Right cardiac atrium (tissue), 5 donors: ENCODE measurements at regions of chr3 and their contacts with region 1.

Region 1: GRCh38 chr3:42118762-42119361 is 27.7 kb downstream of the TRAK1 start:
- DNase-seq: peak in 1 of 3 donors; percentile 51
- ATAC-seq: peak; percentile 30 to 42
- H3K4me3 ChIP-seq: no peak overlapping the region
- H3K27ac ChIP-seq: no peak overlapping the region
- H3K4me1 ChIP-seq: peaks cover 27% of the 10 kb centered on the region
- H3K27me3 ChIP-seq: no peaks in the 10 kb centered on the region

Region 2: DNA sequence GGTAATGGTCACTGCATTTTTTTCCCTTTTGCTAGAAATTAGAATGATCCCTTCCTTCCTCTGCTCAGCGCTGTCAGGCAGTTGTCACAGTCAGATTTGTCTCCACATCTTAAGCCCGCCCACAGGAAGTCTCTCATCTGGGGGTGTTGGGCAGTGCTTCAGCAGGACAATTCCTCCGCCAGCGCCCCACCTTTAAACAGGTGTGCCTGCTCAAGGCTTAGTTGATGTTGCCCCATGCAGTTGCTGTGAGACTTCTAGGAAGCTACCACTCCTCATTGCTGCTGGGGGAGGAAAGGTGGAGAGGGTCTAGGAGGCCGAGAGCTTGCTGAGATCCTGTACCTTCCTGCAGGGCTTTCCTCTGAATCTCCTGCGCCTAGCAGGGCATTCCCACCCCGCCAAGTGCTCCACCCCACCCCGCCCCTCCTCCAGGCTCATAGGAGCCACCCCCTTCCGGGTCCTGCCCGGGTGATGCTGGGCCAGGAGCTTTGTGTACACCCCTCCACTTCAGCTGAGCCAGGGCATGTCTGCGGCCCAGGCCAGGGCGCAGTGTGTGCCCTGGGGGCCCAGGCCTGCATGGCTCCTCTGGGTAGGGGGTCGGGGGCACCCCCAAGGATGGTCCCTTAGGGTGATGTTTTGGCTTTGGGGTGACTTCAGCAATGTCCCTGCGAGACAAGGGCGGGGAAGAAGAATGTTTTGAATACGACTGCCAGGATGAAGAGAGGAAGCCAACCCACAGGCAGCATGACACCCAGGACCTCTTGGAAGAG is 41.0 kb after region 1 on chr3:
- intact Hi-C with region 1: loop called in 1 of 4 experiments (anchors 10 kb)
- DNase-seq: peak; percentile 50 to 78 (median 77)
- ATAC-seq: peak; percentile 88 to 90
- H3K4me3 ChIP-seq: peak overlapping the region; percentile 29
- H3K27ac ChIP-seq: no peak overlapping the region
- H3K4me1 ChIP-seq: peaks cover 17% of the 10 kb centered on the region
- H3K27me3 ChIP-seq: no peaks in the 10 kb centered on the region

Region 3: DNA sequence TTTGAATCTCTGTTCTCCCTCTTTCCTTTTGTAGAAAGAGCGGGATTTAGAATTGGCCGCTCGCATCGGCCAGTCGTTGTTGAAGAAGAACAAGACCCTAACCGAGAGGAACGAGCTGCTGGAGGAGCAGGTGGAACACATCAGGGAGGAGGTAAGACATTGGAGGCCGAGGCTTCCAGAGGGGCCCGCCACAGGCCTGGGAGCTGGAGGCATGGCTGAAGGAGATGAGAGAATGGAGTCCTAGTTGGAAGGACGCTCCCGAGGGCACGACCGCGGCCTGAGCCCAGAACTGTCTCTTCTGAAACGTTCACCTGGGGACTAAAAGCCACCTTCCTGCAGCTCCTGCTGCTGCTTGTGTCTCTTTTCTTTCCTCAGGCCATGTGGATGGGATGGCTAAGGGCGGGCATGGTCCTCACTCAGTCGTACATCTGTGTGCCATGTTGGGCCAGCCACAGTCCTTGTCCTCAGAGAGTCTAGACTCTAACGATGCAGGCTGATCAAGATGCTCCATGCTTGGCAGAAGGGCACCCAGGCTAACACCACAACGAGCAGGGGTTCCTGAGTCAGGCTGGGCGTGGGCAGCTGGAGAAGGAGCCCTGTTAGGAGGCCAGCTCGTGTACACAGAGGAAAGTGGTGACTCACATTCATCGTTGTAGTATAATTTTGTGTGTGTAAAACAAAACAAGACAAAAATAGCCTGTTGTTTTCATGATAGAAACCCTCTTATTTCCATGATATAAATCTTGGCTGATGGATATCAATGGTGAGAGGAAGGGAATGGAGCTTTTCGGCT is 66.0 kb after region 1 on chr3:
- intact Hi-C with region 1: loop called in 3 of 4 experiments (anchors 5 to 10 kb)
- DNase-seq: no peak
- ATAC-seq: no peak
- H3K4me3 ChIP-seq: no peak overlapping the region
- H3K27ac ChIP-seq: no peak overlapping the region
- H3K4me1 ChIP-seq: peaks cover 5% of the 10 kb centered on the region
- H3K27me3 ChIP-seq: no peaks in the 10 kb centered on the region

Region 4: GRCh38 chr3:42190701-42191462 is 72.0 kb after region 1 on chr3:
- intact Hi-C with region 1: loop called in 3 of 4 experiments (anchors 5 to 10 kb)
- DNase-seq: peak in 1 of 3 donors; percentile 64
- ATAC-seq: peak; percentile 45 to 48
- H3K4me3 ChIP-seq: no peak overlapping the region
- H3K27ac ChIP-seq: no peak overlapping the region
- H3K4me1 ChIP-seq: peaks cover 5% of the 10 kb centered on the region
- H3K27me3 ChIP-seq: no peaks in the 10 kb centered on the region